OCI-LY7 (cell line): ENCODE measurements at regions of chr5 and their contacts with region 1.

Region 1: GRCh38 chr5:177431317-177432142 is 5.1 kb downstream of the GRK6 start:
- DNase-seq: peak; percentile 91
- H3K4me3 ChIP-seq: peak overlapping the region; percentile 77
- H3K27ac ChIP-seq: peak overlapping the region; percentile 87
- H3K4me1 ChIP-seq: peaks cover 54% of the 10 kb centered on the region
- CTCF ChIP-seq: no peak

Region 2: DNA sequence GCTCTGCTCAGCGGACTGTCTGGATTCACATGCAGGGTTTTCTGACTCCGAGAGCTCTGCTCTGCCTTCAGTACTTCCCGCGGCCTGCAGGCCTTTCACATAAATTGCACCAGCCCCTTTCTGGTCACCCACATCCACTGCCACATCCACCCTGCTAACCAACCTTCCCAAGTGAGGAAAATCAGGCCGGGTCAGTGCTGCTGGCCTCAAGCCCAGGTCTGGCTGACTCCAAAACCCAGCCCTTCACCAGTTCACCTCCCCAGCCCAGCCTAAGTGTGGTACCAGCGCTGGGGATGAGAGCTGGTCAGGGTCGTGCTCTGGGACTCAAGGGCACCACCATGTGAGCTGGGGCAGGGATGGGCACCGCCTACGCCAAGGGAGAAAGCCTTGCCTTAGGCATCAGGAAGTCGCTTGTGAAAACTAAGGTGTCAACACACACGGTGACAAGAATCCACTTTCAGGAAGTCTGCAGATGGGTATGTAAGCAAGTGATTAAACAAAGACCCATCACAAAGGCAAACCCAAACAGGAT is 92.4 kb before region 1 on chr5:
- CTCF ChIA-PET with region 1: interaction called, 17 read pairs
- POLR2A ChIA-PET with region 1: interaction called, 3 read pairs
- intact Hi-C with region 1: no loop called
- DNase-seq: no peak
- H3K4me3 ChIP-seq: no peak overlapping the region
- H3K27ac ChIP-seq: no peak overlapping the region
- H3K4me1 ChIP-seq: peaks cover 3% of the 10 kb centered on the region
- CTCF ChIP-seq: no peak

Region 3: DNA sequence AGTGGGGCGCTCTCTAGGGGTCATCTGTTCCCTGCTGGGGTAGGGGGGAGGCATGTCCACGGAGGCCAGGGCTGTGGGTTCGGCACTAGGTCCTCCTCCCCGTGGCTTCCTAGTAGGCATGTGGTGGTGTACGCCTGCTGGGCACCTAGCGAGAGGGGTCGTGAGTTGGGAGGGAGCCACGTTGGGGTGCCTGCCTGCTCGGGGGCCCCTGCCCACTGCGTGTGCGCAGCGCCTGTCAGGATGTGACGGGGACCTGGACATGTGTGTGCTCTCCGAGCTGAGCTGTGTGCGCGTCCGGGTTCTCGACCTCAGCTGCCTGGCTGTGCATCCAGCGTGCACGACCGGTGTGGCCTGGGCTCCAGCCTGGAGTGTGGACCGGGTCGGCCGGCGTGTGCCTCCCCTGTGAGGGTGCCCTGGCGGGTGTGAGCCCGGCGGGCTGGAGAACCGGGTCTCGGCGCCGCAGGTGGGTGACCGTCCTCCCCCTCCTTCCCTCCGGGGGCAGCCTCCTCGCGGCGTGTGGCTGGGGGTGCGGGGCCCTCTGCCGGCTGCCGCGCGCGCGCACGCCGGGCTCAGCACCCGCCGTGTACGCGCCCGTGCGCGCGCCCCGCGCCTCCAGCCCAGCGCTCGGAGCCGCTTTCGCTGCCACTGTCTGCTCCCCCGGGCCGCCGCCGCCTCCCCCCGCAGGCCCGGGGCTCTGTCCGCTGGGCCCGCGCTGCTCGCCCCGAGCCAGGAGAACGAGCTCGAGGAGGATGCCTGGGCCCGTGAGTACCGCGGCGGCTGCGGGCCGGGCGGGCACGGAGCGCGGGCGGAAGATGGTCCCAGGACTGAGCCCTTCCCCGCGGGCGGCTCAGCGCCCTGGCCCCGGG is 14.9 kb after region 1 on chr5 and contains the start of gene PRR7:
- CTCF ChIA-PET with region 1: no interaction called
- POLR2A ChIA-PET with region 1: interaction called, 10 read pairs
- intact Hi-C with region 1: loop called (anchors 2 kb)
- DNase-seq: peak; percentile 87
- H3K4me3 ChIP-seq: peak within 1 kb of the TSS; percentile 72
- H3K27ac ChIP-seq: no peak within 1 kb of the TSS
- H3K4me1 ChIP-seq: peaks cover 47% of the 10 kb centered on the region
- CTCF ChIP-seq: no peak; the same call in 1 of the 2 replicates
- total RNA-seq, gene PRR7: 7.0 and 13.6 TPM in 2 replicates